ENCODE measurements at regions of chr14 and their contacts with region 1.

Region 1: GRCh38 chr14:68911594-68912227 is 67.4 kb downstream of the ACTN1 start:
- DNase-seq: peak; percentile 64 to 82
- ATAC-seq: peak; percentile 82 to 99 (median 93)
- H3K4me3 ChIP-seq: no peak overlapping the region
- H3K27ac ChIP-seq: no peak overlapping the region
- H3K4me1 ChIP-seq: no peaks in the 10 kb centered on the region
- H3K27me3 ChIP-seq: no peaks in the 10 kb centered on the region
- CTCF ChIP-seq: peak; percentile 97

Region 2: DNA sequence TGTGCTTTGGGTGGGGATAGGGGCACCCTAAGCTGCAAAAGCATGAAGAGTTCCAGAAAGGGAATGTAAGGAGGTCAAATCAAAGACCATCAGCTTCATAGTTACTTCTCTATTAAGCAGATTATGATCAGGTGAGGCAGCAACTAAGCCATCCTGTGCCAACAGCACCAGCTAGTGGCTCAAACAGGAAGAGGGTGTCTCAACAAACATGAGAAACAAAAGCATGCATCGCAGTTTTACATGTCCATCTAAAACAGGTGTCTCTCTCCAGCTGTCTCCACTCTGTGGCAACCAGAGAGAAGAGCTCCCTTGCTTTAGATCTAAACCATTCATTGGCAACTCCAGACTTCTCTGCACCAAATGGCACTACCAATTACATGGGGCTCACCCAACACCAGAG is 14.5 kb after region 1 on chr14:
- intact Hi-C with region 1: no loop called
- DNase-seq: no peak
- ATAC-seq: no peak
- H3K4me3 ChIP-seq: no peak overlapping the region
- H3K27ac ChIP-seq: no peak overlapping the region
- H3K4me1 ChIP-seq: peaks cover 11% of the 10 kb centered on the region
- H3K27me3 ChIP-seq: no peaks in the 10 kb centered on the region
- CTCF ChIP-seq: no peak

Region 3: GRCh38 chr14:68979021-68979782 is 67.5 kb after region 1 on chr14 and contains the start of gene ACTN1:
- intact Hi-C with region 1: loop called in 1 of 2 experiments (anchors 10 kb)
- DNase-seq: peak; percentile 90 to 93
- ATAC-seq: peak; percentile 89 to 93 (median 92)
- H3K4me3 ChIP-seq: peak within 1 kb of the TSS; percentile 89
- H3K27ac ChIP-seq: peak within 1 kb of the TSS; percentile 82
- H3K4me1 ChIP-seq: peaks cover 6% of the 10 kb centered on the region
- H3K27me3 ChIP-seq: no peaks in the 10 kb centered on the region
- CTCF ChIP-seq: no peak
- total RNA-seq, gene ACTN1: 10.9 to 23.7 (median 16.0) TPM

Region 4: GRCh38 chr14:69002069-69002468 is 90.4 kb after region 1 on chr14:
- intact Hi-C with region 1: loop called in 1 of 2 experiments (anchors 5 kb)
- DNase-seq: no peak
- ATAC-seq: peak; percentile 56 to 63 (median 60)
- H3K4me3 ChIP-seq: no peak overlapping the region
- H3K27ac ChIP-seq: no peak overlapping the region
- H3K4me1 ChIP-seq: no peaks in the 10 kb centered on the region
- H3K27me3 ChIP-seq: no peaks in the 10 kb centered on the region
- CTCF ChIP-seq: peak; percentile 43

Region 5: GRCh38 chr14:69090187-69090789 is 178.6 kb after region 1 on chr14:
- intact Hi-C with region 1: loop called in 1 of 2 experiments (anchors 5 kb)
- DNase-seq: no peak
- ATAC-seq: peak; percentile 53 to 65 (median 55)
- H3K4me3 ChIP-seq: no peak overlapping the region
- H3K27ac ChIP-seq: no peak overlapping the region
- H3K4me1 ChIP-seq: peaks cover 20% of the 10 kb centered on the region
- H3K27me3 ChIP-seq: no peaks in the 10 kb centered on the region
- CTCF ChIP-seq: peak; percentile 66

Region 6: GRCh38 chr14:69107407-69108003 is 195.8 kb after region 1 on chr14:
- intact Hi-C with region 1: loop called (anchors 2 to 5 kb)
- DNase-seq: no peak
- ATAC-seq: peak; percentile 62 to 86 (median 72)
- H3K4me3 ChIP-seq: no peak overlapping the region
- H3K27ac ChIP-seq: no peak overlapping the region
- H3K4me1 ChIP-seq: peaks cover 4% of the 10 kb centered on the region
- H3K27me3 ChIP-seq: no peaks in the 10 kb centered on the region
- CTCF ChIP-seq: peak; percentile 73

Region 7: GRCh38 chr14:69191340-69192111 is 279.8 kb after region 1 on chr14 and contains the start of gene EXD2:
- intact Hi-C with region 1: no loop called
- DNase-seq: peak; percentile 87 to 93
- ATAC-seq: peak; percentile 99
- H3K4me3 ChIP-seq: peak within 1 kb of the TSS; percentile 90
- H3K27ac ChIP-seq: peak within 1 kb of the TSS; percentile 88
- H3K4me1 ChIP-seq: peaks cover 9% of the 10 kb centered on the region
- H3K27me3 ChIP-seq: no peaks in the 10 kb centered on the region
- CTCF ChIP-seq: no peak
- total RNA-seq, gene EXD2: 12.6 to 17.3 (median 13.6) TPM

Region 8: DNA sequence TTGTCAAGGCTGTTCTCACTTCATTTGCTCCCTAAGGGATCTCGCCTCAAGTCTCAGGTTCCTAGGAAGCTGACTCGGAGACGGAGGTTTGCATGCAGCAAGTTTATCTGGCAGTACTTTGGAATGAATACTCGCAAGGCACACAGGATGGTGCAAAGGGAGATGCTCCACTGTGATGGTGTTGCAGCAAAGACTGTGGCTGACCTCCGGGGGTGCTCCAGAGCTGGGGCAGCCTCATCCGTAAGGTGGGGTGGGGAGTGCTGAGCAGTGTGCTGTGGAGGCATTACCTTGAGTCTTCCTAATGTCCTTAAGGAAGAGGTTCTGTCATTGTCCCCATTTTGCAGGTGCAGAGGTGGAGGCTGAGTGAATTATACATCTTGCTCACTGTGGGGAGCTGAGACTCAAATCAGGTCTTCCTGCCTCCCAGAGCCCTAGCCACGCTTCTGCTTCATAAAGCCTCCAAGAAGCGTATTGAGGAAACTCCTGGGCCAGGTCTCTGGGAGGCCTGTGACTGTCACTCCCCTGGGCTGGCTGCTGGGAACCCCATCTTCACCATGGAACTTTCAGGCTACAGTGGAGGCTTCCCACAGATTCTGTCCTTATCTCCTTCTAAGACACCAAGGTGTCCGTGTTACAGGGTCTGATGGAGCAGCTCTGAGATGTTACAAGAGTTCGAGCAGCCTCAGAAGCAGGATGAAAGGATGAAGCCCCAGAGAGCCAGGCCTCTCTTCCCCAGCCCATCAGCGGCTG is 387.8 kb after region 1 on chr14:
- intact Hi-C with region 1: no loop called
- DNase-seq: no peak
- ATAC-seq: no peak
- H3K4me3 ChIP-seq: no peak overlapping the region
- H3K27ac ChIP-seq: no peak overlapping the region
- H3K4me1 ChIP-seq: no peaks in the 10 kb centered on the region
- H3K27me3 ChIP-seq: peaks cover 0 to 3% (median 0%) of the 10 kb centered on the region in 3 donors
- CTCF ChIP-seq: no peak

Measured in psoas muscle (tissue), 8 donors.